ENCODE measurements at regions of chr15 and their contacts with region 1.

Region 1: DNA sequence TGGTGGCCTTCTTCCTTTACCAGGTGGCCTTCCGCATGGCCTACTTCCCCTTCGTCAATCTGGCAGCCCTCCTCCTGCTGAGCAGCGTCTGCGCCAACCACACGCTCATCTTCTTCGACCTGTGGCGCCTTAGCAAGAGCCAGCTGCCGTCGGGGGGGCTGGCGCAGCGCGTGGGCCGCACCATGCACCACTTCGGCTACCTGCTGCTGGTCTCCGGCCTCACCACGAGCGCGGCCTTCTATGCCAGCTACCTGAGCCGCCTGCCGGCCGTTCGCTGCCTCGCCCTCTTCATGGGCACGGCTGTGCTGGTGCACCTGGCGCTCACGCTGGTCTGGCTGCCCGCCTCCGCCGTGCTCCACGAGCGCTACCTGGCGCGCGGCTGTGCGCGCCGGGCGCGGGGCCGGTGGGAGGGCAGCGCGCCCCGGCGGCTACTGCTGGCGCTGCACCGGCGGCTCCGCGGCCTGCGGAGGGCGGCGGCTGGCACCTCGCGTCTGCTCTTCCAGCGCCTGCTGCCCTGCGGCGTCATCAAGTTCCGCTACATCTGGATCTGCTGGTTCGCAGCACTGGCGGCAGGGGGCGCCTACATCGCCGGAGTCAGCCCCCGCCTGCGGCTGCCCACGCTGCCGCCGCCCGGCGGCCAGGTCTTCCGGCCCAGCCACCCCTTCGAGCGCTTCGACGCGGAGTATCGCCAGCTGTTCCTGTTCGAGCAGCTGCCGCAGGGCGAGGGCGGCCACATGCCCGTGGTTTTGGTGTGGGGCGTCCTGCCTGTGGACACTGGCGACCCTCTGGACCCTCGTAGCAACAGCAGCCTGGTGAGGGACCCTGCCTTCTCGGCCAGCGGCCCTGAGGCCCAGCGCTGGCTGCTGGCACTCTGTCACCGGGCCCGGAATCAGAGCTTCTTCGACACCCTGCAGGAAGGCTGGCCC is 9.9 kb downstream of the DISP2 start:
- DNase-seq: peak; percentile 85 to 93 (median 92)
- ATAC-seq: peak; percentile 73 to 79
- H3K4me3 ChIP-seq: no peak overlapping the region
- H3K27ac ChIP-seq: peak overlapping the region; percentile 86
- H3K4me1 ChIP-seq: peaks cover 15% of the 10 kb centered on the region
- H3K27me3 ChIP-seq: no peaks in the 10 kb centered on the region

Region 2: GRCh38 chr15:40412095-40412759 is 44.3 kb after region 1 on chr15:
- intact Hi-C with region 1: loop called in 1 of 4 experiments (anchors 10 kb)
- DNase-seq: no peak
- ATAC-seq: peak in 1 of 2 donors; percentile 27
- H3K4me3 ChIP-seq: no peak overlapping the region
- H3K27ac ChIP-seq: no peak overlapping the region
- H3K4me1 ChIP-seq: no peaks in the 10 kb centered on the region
- H3K27me3 ChIP-seq: no peaks in the 10 kb centered on the region

Measured in right cardiac atrium (tissue), 5 donors.